ENCODE measurements at regions of chr1 and their contacts with region 1.

Region 1: DNA sequence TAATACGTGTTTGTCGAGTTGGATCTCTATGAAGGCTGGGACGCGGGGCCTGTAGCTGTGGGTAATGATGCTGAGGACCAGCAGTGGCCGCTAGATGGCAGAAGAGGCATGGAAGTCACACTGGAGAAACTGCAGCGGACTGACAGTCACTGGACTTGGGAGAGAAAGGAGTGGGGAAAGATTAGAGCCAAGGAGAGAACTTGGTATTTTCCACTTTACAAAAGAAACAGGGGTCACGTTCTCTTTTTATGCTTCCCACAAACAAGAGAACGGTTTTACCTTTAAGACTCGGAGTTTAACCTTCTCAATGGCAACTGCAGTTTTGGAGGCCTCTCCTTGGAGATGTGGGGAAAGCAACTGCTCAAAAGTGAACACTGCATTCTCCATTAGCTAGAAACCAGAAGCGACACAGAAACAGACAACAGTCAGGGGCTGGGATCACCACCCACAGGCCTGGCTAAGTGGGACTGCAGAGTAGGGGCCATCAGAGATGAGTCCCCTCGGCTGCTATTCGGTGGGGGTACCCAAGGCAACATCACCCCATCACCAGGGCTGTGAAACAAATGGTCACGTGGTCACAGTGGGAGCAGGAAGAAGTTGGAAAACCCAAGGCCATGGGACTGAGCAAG is 51.1 kb upstream of the EDEM3 start:
- DNase-seq: peak; percentile 84
- H3K4me3 Mint-ChIP-seq: no peak overlapping the region
- H3K27ac Mint-ChIP-seq: peak overlapping the region; percentile 43
- H3K4me1 Mint-ChIP-seq: peaks cover 2% of the 10 kb centered on the region
- H3K27me3 Mint-ChIP-seq: no peaks in the 10 kb centered on the region

Region 2: DNA sequence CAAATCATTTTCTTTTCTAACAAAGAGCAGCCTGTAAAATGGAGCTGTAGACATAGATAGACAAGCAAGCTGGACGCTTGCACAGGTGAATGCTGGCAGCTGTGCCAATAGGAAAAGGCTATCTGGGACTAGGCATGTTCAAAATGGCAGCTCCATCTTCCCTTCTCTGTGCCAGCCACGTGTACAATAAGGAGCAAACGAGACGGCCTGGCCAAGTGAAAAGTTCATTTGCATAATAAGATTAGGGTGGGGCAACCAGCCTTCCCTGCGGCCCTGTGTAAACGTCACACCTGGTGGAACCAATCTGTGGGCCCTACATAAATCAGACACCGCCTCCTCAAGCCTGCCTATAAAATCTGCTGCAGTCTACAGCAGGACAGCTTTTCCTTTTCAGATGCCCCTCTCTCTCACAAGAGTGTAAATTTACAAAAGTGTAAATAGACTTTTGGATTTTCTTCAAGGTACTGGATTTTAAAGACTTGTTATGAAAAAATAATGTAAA is 34.5 kb before region 1 on chr1:
- CTCF ChIA-PET with region 1: no interaction called
- POLR2A ChIA-PET with region 1: no interaction called
- DNase-seq: no peak
- H3K4me3 Mint-ChIP-seq: no peak overlapping the region
- H3K27ac Mint-ChIP-seq: no peak overlapping the region
- H3K4me1 Mint-ChIP-seq: no peaks in the 10 kb centered on the region
- H3K27me3 Mint-ChIP-seq: peaks cover 8% of the 10 kb centered on the region

Region 3: DNA sequence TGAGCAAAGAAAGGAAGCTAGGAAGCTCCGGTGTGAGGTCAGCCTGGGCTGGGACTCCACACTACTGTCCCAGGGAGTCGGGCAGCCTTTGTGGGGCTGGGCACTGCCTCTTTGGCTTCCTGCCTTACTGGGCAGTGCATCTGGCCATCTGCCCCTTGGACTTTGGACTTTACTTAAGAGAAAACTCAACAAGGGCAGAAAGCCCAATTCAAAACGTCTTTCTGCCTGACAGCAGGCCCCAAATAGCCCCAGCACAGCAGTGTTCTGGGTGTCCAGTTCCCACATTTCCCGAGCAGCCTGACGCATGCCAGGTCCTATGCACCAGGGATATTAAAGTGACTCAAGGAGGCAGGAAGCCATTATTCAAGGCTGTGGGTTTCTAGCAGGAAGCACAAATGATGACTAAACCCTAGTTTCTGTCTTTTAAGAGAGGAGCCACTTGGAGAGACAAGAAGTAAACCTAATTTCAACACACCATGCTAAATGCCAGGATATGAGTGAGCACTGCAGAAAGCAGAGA is 13.3 kb before region 1 on chr1:
- CTCF ChIA-PET with region 1: interaction called, 12 read pairs
- POLR2A ChIA-PET with region 1: no interaction called
- DNase-seq: no peak
- H3K4me3 Mint-ChIP-seq: no peak overlapping the region
- H3K27ac Mint-ChIP-seq: no peak overlapping the region
- H3K4me1 Mint-ChIP-seq: peaks cover 15% of the 10 kb centered on the region
- H3K27me3 Mint-ChIP-seq: no peaks in the 10 kb centered on the region

Region 4: GRCh38 chr1:184827600-184828368 is 22.0 kb after region 1 on chr1:
- CTCF ChIA-PET with region 1: interaction called, 16 read pairs
- POLR2A ChIA-PET with region 1: no interaction called
- DNase-seq: no peak
- H3K4me3 Mint-ChIP-seq: no peak overlapping the region
- H3K27ac Mint-ChIP-seq: no peak overlapping the region
- H3K4me1 Mint-ChIP-seq: peaks cover 1% of the 10 kb centered on the region
- H3K27me3 Mint-ChIP-seq: no peaks in the 10 kb centered on the region

Region 5: DNA sequence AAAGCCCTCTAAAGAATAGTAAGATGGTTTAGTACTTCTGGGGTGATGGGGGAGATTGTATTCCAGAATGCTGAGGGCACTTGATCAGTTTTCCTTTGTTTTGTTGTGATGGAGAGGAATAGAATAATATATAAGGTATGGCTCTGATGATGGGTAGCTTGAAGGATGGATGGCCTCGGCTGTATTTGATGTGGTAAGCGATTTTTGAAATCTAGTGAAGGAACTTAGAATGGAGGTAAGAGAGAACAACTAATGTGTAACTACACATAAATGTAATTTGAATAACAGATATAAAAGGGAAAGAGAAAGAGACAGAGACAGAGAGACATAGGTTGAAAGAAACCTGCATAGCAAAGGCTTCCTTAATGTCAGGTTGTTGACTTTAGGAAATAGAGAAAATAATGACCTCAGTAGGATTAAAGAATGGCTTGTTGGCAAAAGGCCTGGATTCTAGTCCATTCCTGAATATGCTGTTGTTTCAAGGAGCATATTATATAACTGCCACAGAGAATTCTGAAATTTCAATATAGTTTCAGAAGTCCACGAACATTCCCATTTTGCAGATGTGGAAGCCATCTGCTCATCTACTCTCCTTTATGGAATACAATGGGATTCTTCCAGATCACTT is 109.8 kb after region 1 on chr1:
- CTCF ChIA-PET with region 1: no interaction called
- POLR2A ChIA-PET with region 1: no interaction called
- DNase-seq: no peak
- H3K4me3 Mint-ChIP-seq: no peak overlapping the region
- H3K27ac Mint-ChIP-seq: no peak overlapping the region
- H3K4me1 Mint-ChIP-seq: peaks cover 12% of the 10 kb centered on the region
- H3K27me3 Mint-ChIP-seq: no peaks in the 10 kb centered on the region

Region 6: GRCh38 chr1:184982002-184982954 is 176.5 kb after region 1 on chr1:
- CTCF ChIA-PET with region 1: interaction called, 15 read pairs
- POLR2A ChIA-PET with region 1: interaction called, 5 read pairs
- DNase-seq: peak; percentile 82
- H3K4me3 Mint-ChIP-seq: no peak overlapping the region
- H3K27ac Mint-ChIP-seq: no peak overlapping the region
- H3K4me1 Mint-ChIP-seq: peaks cover 7% of the 10 kb centered on the region
- H3K27me3 Mint-ChIP-seq: peaks cover 26% of the 10 kb centered on the region

Region 7: GRCh38 chr1:185170291-185170848 is 364.6 kb after region 1 on chr1:
- CTCF ChIA-PET with region 1: interaction called, 14 read pairs
- POLR2A ChIA-PET with region 1: no interaction called
- DNase-seq: peak; percentile 64
- H3K4me3 Mint-ChIP-seq: no peak overlapping the region
- H3K27ac Mint-ChIP-seq: peak overlapping the region; percentile 19
- H3K4me1 Mint-ChIP-seq: peaks cover 13% of the 10 kb centered on the region
- H3K27me3 Mint-ChIP-seq: no peaks in the 10 kb centered on the region

Measured in activated CD4-positive, alpha-beta T cell treated with anti-CD3 and anti-CD28 coated beads, Interleukin-2, amount 10 ng/mL, durations not matched to agents 7 days and 5 days (primary cell).